GM13976 (cell line): ENCODE measurements at regions of chr1 and their contacts with region 1.

Region 1: DNA sequence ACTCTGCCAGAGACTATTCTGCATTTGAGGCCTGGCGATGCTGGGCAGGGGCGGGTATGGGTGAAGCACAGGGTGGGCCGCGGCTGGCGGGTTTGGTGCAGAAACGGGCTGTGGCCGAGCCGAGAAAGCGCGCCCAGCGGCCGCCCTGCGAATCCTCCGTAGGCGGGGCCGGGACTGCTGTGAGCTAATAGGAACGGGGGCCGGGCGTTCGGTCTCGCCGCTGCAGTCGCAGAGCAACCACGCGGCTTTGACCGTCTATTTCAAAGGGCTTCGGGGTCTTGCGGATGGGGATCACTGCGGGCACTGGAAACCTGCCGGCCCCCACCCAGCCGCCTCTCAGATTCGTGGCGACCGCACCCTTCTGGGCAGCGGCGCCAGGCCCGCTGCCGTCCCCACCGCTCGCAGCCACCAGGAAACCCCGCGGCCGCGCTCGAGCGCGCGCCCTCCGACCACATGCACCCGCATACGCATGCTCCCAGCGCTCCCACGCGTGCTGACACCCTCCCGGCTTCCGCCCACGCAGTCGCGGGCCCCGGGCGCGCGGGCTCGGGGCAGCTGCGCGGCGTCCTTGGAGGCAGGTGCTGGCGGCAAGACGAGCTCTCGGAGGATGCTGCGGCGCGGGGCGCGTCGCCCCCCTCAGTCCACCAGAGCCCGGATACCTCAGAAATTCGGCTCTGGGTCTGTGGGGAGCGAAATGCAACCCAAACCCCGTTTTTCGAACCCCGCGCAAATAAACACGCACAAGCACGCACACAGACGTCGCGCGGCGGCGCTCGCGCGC is 32.6 kb downstream of the DNTTIP2 start:
- DNase-seq: peak; percentile 88
- CTCF ChIP-seq: no peak

Region 2: GRCh38 chr1:93304716-93305138 is 541.7 kb before region 1 on chr1:
- in situ Hi-C with region 1: loop called (anchors 25 kb)
- DNase-seq: peak; percentile 50
- CTCF ChIP-seq: peak; percentile 41

Region 3: GRCh38 chr1:93597709-93598108 is 248.7 kb before region 1 on chr1:
- in situ Hi-C with region 1: no loop called
- DNase-seq: no peak
- CTCF ChIP-seq: no peak